Transverse colon (tissue), 4 donors: ENCODE measurements at regions of chr19 and their contacts with region 1.

Region 1: DNA sequence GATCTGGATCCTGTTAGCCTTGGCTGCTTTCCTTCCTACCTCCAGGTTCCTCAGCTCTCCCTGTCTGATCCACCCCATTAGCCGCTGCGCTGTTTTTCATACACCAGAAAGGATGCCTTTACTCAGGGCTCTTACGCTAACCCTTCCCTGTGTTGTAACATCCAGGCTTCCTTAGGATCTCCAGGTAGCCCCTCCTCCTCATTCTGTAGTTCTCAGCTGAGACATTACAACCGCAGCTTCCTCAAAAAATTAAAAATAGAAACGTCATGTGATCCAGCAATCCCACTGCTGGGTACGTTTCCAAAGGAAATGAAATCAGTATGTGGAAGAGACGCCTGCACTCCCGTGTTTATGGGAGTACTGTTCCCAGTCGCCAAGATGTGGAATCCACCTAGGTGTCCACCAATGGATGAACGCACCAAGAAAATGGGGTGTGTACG is 18.4 kb upstream of the MYADM start:
- DNase-seq: no peak
- H3K4me3 ChIP-seq: no peak overlapping the region
- H3K27ac ChIP-seq: no peak overlapping the region
- H3K4me1 ChIP-seq: peaks cover 0 to 5% (median 0%) of the 10 kb centered on the region in 4 donors
- H3K27me3 ChIP-seq: peaks cover 7% of the 10 kb centered on the region
- CTCF ChIP-seq: no peak
- EP300 ChIP-seq: no peak
- POLR2A ChIP-seq: no peak

Region 2: DNA sequence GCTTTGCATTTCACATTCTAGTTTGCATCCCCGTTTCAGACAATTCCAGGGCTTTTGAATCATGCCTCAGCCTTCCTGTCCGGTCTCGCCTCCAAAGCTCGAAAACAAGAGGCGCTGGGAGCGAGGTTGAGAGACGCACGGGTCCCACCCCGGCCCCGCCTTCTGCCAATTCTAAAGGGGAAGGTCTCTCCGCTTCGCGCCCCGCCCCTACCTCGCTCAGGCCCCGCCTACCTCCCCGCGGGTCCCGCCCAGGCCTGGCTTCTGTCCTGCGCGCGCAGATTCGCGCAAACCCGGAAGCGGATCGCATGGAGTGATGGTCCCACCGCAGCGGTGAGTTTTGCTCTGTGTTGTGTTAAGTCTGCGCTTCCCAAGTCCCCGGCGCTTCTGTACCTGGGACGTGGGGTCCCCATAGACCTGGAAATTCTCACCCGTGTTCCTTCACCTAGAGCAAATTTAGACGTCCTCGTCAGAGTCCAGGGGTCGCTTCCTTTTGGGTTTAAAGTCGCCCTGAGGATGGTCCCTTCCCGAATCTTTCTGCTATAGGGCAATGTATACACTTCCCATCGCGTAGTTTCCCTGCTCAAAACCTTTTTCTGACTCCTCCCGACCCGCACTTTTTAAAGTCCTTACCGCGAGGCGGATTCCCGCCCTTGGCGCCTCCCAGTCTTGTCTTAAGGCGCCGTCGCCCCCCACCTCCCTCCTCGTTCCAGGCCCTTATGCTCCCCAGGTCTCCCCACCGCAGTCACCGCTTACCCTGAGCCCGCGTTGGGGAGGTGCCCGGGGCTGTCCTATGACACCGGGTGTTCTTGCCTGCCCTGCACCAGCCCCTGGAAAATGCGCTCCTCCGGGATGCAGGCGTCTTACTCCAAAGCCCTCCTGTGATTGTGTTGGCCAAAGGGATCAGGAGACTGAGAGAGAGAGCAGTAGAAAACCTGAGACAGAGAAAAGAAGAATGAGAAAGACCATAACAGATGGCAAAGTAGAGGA is 515.5 kb before region 1 on chr19 and contains the start of gene ZNF845:
- in situ Hi-C with region 1: no loop called
- intact Hi-C with region 1: no loop called
- DNase-seq: peak; percentile 98
- H3K4me3 ChIP-seq: peak within 1 kb of the TSS; percentile 76 to 97 (median 90)
- H3K27ac ChIP-seq: peak within 1 kb of the TSS; percentile 75 to 89 (median 86)
- H3K4me1 ChIP-seq: peaks cover 0 to 15% (median 7%) of the 10 kb centered on the region in 4 donors
- H3K27me3 ChIP-seq: no peaks in the 10 kb centered on the region
- CTCF ChIP-seq: no peak
- EP300 ChIP-seq: no peak
- POLR2A ChIP-seq: peak; percentile 68
- total RNA-seq, gene ZNF845: 1.6 to 8.4 (median 5.9) TPM

Region 3: GRCh38 chr19:53881482-53882390 is 32.5 kb after region 1 on chr19 and contains the start of gene PRKCG:
- in situ Hi-C with region 1: loop called in 1 of 4 experiments (anchors 5 kb)
- intact Hi-C with region 1: loop called (anchors 2 kb)
- DNase-seq: peak; percentile 71
- H3K4me3 ChIP-seq: peak within 1 kb of the TSS in 3 of 4 donors; percentile 16 to 35 (median 27)
- H3K27ac ChIP-seq: no peak within 1 kb of the TSS
- H3K4me1 ChIP-seq: peaks cover 14 to 36% (median 22%) of the 10 kb centered on the region in 4 donors
- H3K27me3 ChIP-seq: peaks cover 66% of the 10 kb centered on the region
- CTCF ChIP-seq: peak; percentile 40 to 61 (median 59)
- EP300 ChIP-seq: no peak
- POLR2A ChIP-seq: no peak
- total RNA-seq, gene PRKCG: 0.32 TPM in 1 of 4 donors, not detected in the others

Region 4: DNA sequence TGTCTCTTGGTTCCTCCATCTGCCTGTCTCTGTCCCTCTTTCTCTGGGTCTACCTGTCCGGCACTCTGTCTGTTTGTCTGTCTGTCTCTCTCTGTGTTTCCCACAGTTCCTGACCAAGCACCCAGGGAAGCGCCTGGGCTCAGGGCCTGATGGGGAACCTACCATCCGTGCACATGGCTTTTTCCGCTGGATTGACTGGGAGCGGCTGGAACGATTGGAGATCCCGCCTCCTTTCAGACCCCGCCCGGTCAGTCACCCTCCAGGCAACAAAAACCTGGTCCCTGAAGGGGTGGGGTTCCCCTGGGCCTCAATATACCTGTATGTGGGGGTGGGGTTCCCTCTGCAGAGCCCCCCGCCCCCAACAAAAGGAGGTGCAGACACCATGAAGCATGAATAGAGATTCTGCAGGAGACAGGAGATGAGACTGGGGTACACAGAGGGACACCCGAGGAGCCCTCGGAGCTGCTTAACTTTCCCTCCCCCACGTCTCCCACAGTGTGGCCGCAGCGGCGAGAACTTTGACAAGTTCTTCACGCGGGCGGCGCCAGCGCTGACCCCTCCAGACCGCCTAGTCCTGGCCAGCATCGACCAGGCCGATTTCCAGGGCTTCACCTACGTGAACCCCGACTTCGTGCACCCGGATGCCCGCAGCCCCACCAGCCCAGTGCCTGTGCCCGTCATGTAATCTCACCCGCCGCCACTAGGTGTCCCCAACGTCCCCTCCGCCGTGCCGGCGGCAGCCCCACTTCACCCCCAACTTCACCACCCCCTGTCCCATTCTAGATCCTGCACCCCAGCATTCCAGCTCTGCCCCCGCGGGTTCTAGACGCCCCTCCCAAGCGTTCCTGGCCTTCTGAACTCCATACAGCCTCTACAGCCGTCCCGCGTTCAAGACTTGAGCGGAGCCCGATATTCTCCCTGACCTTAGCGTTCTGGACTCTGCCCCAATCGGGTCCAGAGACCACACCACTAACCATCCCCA is 57.2 kb after region 1 on chr19:
- in situ Hi-C with region 1: loop called in 1 of 4 experiments (anchors 10 kb)
- intact Hi-C with region 1: no loop called
- DNase-seq: peak; percentile 36
- H3K4me3 ChIP-seq: no peak overlapping the region
- H3K27ac ChIP-seq: no peak overlapping the region
- H3K4me1 ChIP-seq: peaks cover 0 to 12% (median 8%) of the 10 kb centered on the region in 4 donors
- H3K27me3 ChIP-seq: peaks cover 76% of the 10 kb centered on the region
- CTCF ChIP-seq: peak; percentile 65 to 85 (median 82)
- EP300 ChIP-seq: no peak
- POLR2A ChIP-seq: no peak

Region 5: DNA sequence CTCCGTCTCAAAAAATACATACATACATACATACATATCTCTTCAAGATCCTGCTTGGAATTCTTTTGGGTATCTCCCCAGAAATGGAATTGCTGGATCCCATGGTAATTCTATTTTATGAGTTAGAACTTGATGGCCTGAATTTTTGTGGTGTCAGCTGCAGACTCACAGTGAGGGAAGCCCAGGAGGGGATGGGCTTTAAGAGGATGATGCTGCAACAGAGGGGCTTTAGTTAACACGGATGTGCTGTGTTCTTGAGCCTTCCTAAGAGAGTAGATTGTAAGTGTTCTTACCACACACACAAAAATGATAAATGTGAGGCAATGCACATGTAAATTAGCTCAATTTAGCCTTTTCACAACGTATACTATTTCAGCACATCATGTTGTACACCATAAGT is 173.9 kb after region 1 on chr19:
- in situ Hi-C with region 1: loop called in 2 of 4 experiments (anchors 10 kb)
- intact Hi-C with region 1: loop called (anchors 5 kb)
- DNase-seq: no peak
- H3K4me3 ChIP-seq: no peak overlapping the region
- H3K27ac ChIP-seq: no peak overlapping the region
- H3K4me1 ChIP-seq: no peaks in the 10 kb centered on the region
- H3K27me3 ChIP-seq: peaks cover 29% of the 10 kb centered on the region
- CTCF ChIP-seq: no peak
- EP300 ChIP-seq: no peak
- POLR2A ChIP-seq: no peak

Region 6: GRCh38 chr19:54029930-54030490 is 180.8 kb after region 1 on chr19:
- in situ Hi-C with region 1: loop called in 2 of 4 experiments (anchors 10 kb)
- intact Hi-C with region 1: no loop called
- DNase-seq: peak; percentile 53
- H3K4me3 ChIP-seq: no peak overlapping the region
- H3K27ac ChIP-seq: no peak overlapping the region
- H3K4me1 ChIP-seq: no peaks in the 10 kb centered on the region
- H3K27me3 ChIP-seq: peaks cover 28% of the 10 kb centered on the region
- CTCF ChIP-seq: peak; percentile 21 to 66 (median 47)
- EP300 ChIP-seq: no peak
- POLR2A ChIP-seq: no peak